GM10248 (cell line): ENCODE measurements at regions of chr12 and their contacts with region 1.

Region 1: DNA sequence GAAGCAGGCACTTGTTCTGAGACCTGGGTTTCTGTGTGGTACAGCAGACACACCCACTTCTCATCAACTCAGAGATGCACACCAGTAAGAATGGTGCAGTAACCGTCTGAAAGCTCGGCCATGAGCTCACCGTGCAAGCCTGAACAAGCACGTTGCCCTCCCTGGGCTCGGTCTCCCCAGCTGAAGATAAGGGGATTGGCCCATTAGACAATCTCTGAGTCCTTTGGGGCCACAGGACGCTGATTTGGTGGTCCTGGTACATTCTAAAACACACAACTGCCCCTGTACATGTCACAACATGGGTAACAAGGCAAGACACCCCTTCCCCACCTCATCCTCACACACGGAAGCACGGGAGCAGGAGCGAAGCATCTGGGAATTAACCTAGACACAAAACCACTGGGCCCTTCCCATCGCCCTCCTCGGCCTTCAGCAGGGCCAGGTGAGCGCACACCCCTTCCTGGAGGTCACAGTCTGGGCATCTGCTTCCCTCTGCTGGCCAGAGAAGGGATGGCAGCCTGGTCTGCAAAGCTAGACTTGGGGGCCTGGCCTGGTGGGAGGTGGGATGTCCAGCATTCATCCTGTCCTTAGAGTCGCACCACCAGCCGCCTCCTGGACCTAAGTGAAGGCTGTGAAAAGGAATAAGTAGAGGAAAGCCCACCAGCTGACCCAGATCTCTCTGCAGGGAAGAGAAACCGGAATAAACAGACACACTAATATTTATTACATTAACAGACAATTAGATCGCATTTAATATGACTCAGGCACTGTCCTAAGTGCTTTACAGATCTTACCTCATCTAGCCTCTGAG is 18.9 kb upstream of the SMUG1 start:
- DNase-seq: peak; percentile 84
- CTCF ChIP-seq: peak; percentile 99

Region 2: DNA sequence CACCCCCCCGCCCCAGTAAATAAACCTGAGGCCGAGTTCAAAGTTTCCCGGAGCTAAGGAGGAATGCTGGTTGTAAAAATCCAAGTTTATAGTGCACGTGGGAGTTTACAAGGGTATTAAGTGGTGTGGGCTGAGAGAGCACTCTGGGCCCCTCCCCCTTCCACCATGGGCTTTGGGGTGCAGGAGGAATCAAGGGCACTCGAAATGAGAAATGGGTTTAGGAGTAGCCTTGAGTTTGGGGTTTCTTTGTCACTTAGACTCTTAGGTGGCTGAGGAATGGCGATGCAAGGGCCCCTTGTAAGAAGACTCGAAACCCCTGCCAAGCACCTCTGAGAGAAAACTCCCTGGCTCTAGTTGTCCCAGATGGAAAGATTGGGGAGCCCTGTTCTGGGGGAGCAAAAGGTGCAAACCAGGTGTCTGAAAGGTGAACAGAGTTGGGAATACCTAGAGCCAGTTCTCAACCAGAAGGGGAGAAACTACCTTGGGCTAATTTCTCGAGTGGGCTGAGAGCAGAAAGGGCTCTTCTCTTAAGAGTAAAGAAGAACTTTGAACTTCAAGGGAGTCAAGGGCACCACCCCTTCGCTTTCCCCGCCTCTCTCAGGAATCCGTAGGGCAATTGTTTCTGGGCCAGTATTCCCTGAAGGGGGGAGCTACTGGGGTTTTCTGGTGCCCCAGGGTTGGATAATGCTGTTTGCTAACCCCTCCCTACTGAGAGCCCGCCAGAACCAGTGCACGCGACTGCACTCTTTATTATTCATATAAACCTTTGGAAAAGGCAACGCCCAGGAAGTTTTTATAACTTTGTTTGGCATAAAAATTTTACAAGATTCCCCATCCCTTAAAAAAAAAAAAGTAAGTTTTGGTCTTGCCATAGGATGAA is 229.0 kb before region 1 on chr12:
- CTCF ChIA-PET with region 1: interaction called, 10 read pairs
- POLR2A ChIA-PET with region 1: no interaction called
- DNase-seq: no peak
- CTCF ChIP-seq: no peak

Region 3: GRCh38 chr12:53995378-53996239 is 212.1 kb before region 1 on chr12:
- CTCF ChIA-PET with region 1: interaction called, 20 read pairs
- POLR2A ChIA-PET with region 1: no interaction called
- DNase-seq: no peak
- CTCF ChIP-seq: no peak

Region 4: DNA sequence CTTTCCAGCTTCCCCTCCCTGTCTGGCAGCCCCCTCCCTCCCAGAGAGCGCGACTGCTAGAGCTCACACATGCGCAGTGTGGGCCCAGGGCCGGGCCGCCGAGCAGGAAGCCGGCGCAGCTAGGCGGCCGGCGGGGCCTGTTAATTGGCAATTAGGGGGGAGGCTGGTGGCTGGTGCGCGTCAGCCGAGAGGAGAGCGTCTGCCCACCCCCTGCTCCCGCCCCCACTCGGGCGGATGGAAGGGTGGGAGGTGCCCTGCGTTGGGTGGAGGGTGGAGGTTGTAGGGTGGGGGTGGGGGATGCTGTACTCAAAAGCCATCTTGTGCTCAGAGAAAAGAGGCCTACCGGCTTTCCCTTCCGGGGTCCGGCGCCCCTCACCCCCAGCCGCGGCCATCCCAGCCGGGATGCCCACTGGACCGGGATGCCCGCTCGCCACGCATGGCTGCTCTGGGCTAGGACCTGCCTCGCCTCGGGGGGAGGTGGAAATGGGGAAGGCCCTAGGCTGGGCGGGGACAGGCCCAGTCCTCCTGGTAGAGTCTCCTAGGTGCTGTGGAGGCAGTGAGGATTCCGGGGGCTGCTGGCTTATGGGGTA is 189.7 kb before region 1 on chr12:
- CTCF ChIA-PET with region 1: interaction called, 27 read pairs
- POLR2A ChIA-PET with region 1: no interaction called
- DNase-seq: peak; percentile 94
- CTCF ChIP-seq: no peak

Region 5: GRCh38 chr12:54039417-54040147 is 168.1 kb before region 1 on chr12:
- CTCF ChIA-PET with region 1: interaction called, 139 read pairs
- POLR2A ChIA-PET with region 1: no interaction called
- DNase-seq: no peak
- CTCF ChIP-seq: no peak

Region 6: DNA sequence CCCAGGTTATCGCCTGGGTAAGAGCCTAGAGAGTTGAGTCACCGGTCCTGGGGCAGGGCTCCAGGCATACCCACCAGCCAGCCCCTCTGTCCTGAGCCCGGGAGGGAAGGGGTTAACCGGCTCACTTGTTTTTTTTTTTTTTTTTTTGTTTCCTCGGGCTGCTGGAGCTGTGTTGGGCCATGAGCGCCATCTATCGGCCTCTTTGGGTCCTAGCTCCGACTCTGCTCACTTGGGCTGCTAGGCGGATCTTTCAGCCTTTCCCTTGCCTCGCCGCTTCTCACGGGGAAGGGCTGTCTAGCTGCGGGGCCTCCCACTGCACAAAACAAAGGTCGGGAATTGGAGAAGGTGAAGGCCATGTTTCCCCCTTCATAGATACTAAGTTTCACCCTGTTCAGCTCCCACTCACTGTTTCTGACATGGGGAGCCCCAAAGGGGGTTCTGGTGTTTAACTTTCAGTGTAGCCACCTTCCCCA is 16.1 kb before region 1 on chr12:
- CTCF ChIA-PET with region 1: interaction called, 108 read pairs
- POLR2A ChIA-PET with region 1: no interaction called
- DNase-seq: peak; percentile 81
- CTCF ChIP-seq: peak; percentile 81

Region 7: DNA sequence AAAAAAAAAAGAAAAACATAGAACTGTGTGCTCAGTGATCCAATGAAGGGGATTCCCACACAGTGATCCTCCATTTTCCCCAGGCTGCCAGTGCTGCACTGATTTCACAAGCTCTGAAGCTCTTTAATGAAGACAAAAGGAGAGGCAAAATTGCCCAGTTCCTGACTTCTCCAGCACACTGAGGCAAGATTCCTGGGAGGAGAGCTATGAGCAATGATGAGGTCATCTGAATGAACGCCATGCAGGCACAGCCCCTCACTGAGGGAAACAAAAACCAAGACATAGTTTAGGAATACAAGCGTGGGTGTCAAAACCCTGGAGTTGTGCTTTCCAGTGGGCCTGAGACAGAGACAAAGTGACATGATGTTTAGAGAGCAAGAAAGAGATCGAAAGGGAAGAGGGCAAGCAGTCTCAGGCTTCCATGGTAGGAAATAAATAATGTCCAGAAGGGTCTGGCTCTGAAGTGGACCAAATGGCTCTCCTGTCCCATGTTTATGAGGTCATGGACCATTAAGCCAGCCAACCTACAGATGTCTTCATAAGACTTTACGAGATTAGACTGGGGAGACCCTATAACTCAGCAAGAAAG is 22.0 kb after region 1 on chr12:
- CTCF ChIA-PET with region 1: no interaction called
- POLR2A ChIA-PET with region 1: no interaction called
- DNase-seq: no peak
- CTCF ChIP-seq: no peak

Region 8: DNA sequence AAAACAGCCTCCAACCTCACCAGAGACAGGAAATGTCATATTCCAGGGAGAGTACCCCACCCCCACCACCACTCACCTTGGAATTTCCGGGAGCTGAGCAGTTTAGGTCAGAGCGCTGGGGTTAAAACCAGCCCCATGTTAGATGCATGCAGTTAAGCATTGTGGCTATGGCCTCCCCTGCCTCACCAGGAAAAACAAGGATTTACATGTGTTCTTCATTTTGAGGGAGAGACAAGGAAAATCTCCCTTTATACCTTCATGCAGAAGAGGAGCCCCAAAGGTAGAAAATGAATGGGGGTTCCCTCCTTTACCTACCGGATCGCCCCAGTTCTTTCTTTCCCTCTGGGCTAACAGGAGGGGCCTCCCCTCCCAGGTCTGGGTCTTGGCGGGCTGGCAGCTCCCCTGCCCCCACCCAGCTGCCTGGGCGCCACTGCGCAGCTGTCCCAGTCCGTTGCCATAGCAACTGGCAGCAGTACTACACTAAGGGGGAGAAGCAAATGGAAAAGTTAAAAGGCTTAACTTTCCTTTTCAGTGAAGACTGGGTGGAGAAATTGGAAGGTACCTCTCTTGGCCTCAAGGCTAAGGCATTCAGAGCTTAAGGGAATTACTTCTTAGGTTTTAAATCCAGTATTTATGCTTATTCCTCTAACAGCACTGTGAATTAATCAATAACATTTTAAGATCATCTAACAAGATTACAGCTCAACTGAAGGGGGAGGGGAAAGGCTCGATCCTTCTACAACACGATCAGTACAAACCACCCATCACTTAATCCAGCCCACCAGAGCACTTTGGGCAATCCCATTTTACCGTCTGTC is 51.7 kb after region 1 on chr12:
- CTCF ChIA-PET with region 1: no interaction called
- POLR2A ChIA-PET with region 1: no interaction called
- DNase-seq: peak; percentile 82
- CTCF ChIP-seq: no peak

Region 9: DNA sequence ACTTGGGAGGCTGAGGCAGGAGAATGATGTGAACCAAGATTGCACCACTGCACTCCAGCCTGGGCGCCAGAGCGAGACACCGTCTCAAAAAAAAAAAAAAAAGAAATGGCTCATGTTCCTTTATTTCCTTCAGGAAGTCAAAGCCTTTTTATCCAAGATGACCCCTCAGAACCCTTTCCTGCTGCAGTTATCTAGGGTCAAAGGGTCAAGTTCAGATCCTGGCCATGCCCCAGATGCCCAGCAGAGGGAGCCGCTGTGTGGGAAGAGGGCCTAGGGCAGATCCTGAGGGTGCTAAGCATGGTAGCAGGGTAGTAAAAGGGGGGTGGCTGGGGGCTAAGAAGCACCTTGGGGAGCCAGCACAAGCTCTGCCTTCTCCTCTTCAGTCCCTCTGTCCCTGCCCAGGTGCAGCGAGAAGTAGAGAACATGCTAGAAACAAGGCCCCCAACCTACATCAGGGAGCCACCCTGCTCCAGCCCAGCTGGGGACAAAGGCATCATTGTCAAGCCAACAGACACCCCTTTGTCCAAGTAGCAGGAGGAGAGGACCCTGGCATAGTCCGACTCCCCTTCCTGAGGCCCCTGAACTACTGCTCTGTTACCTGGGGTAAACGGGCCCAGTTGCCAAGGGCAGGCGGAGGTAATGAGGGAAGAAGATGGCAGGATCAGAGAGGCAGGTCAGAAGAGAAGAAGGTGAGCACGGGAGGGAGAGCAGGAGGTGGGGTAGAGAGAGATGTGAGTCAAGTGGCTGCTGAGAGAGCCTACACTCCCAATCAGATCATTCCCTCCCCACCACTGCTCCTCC is 86.7 kb after region 1 on chr12:
- CTCF ChIA-PET with region 1: no interaction called
- POLR2A ChIA-PET with region 1: no interaction called
- DNase-seq: peak; percentile 79
- CTCF ChIP-seq: peak; percentile 91

Region 10: GRCh38 chr12:54398995-54399793 is 191.5 kb after region 1 on chr12:
- CTCF ChIA-PET with region 1: interaction called, 10 read pairs
- POLR2A ChIA-PET with region 1: interaction called, 3 read pairs
- DNase-seq: peak; percentile 84
- CTCF ChIP-seq: peak; percentile 100

Region 11: GRCh38 chr12:54678131-54678530 is 470.4 kb after region 1 on chr12:
- CTCF ChIA-PET with region 1: no interaction called
- POLR2A ChIA-PET with region 1: no interaction called
- DNase-seq: no peak
- CTCF ChIP-seq: no peak